CD4-positive, alpha-beta memory T cell (primary cell): ENCODE measurements at regions of chr3 and their contacts with region 1.

Region 1: DNA sequence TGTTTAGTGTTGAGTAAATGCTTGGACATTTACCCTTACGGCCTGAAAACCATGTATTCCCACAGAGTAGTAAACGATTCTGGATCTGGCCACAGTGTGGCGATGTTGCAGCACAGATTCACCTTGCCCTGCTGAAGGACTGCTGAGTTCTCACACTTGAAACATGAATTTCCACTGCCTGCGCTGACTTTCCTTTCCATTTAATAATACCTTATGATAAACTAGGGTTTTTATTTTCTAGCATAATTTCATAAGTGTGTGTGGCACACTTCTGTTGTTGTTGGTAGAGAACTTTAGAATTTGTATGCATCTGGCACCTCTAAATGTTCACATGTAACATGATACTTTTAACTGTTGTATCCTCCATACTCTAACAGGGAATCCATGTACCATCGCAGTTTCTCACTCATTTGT is 53.9 kb downstream of the C3orf38 start:
- DNase-seq: peak in 4 of 5 donors; percentile 17 to 33 (median 20)
- H3K4me3 ChIP-seq: no peak overlapping the region
- H3K4me3 Mint-ChIP-seq: no peak overlapping the region
- H3K27ac ChIP-seq: no peak overlapping the region
- H3K27ac Mint-ChIP-seq: peak overlapping the region in 1 of 7 donors; percentile 14
- H3K4me1 ChIP-seq: no peaks in the 10 kb centered on the region
- H3K4me1 Mint-ChIP-seq: no peaks in the 10 kb centered on the region
- H3K27me3 ChIP-seq: no peaks in the 10 kb centered on the region
- H3K27me3 Mint-ChIP-seq: peaks cover 0 to 4% of the 10 kb centered on the region in 2 donors

Region 2: GRCh38 chr3:88149509-88150362 is 53.9 kb before region 1 on chr3 and contains the start of gene C3orf38:
- CTCF ChIA-PET with region 1: no interaction called
- POLR2A ChIA-PET with region 1: no interaction called
- intact Hi-C with region 1: no loop called
- DNase-seq: peak; percentile 83 to 86 (median 85)
- H3K4me3 ChIP-seq: peak within 1 kb of the TSS; percentile 96 to 99
- H3K4me3 Mint-ChIP-seq: peak within 1 kb of the TSS; percentile 96 to 99 (median 98)
- H3K27ac ChIP-seq: peak within 1 kb of the TSS; percentile 90
- H3K27ac Mint-ChIP-seq: peak within 1 kb of the TSS; percentile 95 to 99 (median 98)
- H3K4me1 ChIP-seq: peaks cover 36% of the 10 kb centered on the region
- H3K4me1 Mint-ChIP-seq: peaks cover 15 to 43% (median 26%) of the 10 kb centered on the region in 4 donors
- H3K27me3 ChIP-seq: no peaks in the 10 kb centered on the region
- H3K27me3 Mint-ChIP-seq: no peaks in the 10 kb centered on the region
- total RNA-seq, gene C3orf38: 36.5 to 38.5 TPM

Region 3: DNA sequence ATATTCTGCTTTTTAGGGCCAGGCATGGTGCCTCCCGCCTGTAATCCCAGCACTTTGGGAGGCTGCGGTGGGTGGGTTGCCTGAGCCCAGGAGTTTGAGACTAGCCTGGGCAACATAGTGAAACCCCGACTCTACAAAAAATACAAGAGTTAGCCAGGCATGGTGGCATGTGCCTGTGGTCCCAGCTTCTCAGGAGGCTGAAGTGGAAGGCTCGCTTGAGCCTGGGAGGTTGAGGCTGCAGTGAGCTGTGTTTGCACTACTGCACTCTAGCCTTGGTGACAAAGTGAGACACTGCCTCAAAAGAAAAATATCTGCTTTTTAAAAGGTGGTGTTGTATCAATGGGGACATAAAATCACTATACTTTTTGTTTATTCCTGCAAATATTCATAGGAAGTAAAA is 58.9 kb after region 1 on chr3:
- CTCF ChIA-PET with region 1: no interaction called
- POLR2A ChIA-PET with region 1: no interaction called
- intact Hi-C with region 1: no loop called
- DNase-seq: no peak
- H3K4me3 ChIP-seq: no peak overlapping the region
- H3K4me3 Mint-ChIP-seq: no peak overlapping the region
- H3K27ac ChIP-seq: no peak overlapping the region
- H3K27ac Mint-ChIP-seq: no peak overlapping the region
- H3K4me1 ChIP-seq: no peaks in the 10 kb centered on the region
- H3K4me1 Mint-ChIP-seq: no peaks in the 10 kb centered on the region
- H3K27me3 ChIP-seq: no peaks in the 10 kb centered on the region
- H3K27me3 Mint-ChIP-seq: peaks cover 0 to 2% of the 10 kb centered on the region in 2 donors

Region 4: DNA sequence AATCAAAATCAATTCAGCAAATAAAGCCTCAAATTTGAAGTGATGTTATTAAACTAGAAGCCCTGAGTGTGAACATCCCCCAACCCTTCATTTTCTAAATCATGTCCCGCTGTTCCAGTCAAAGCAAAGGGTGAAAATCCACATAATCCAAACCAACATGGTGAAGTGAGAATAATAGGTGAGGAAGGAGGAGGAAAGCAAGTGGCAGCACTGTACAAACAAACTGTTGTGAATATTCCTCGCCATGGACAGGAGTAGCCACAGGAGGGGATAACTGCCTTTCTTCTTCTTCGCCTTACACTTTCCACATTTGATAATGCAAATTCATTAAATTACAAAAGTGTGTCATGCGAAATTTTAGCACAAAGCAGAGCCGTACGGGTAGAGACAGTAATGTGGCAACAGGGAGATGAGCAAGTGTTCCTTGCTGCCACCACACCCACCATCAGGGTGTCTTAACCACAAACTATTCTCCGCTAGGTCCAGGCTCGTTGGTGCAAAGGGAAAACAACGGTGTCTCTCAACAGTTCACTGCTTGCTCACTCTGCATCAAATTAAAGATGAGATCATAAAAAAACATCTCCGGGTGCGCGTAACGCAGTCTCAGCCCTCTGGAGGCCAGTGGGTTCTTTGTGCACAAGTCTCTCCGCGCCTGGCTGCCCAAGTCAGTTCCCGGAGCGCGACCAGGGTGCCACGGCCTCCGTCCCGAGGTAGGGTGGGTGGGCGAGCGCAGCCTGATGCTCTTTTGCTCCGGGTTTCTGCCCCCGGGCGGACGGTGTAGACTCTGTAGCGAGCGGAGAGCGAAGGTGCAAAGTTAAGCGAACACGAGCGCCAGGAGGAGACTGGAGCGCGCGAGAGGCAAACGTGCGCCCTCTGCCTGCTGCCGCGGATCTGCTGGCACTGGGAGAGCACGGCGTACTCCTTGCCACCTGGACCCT is 910.5 kb after region 1 on chr3:
- CTCF ChIA-PET with region 1: no interaction called
- POLR2A ChIA-PET with region 1: no interaction called
- intact Hi-C with region 1: loop called (anchors 5 kb)
- DNase-seq: peak; percentile 5 to 25 (median 10)
- H3K4me3 ChIP-seq: no peak overlapping the region
- H3K4me3 Mint-ChIP-seq: peak overlapping the region in 7 of 8 donors; percentile 15 to 66 (median 61)
- H3K27ac ChIP-seq: no peak overlapping the region
- H3K27ac Mint-ChIP-seq: no peak overlapping the region
- H3K4me1 ChIP-seq: no peaks in the 10 kb centered on the region
- H3K4me1 Mint-ChIP-seq: peaks cover 0 to 6% (median 5%) of the 10 kb centered on the region in 4 donors
- H3K27me3 ChIP-seq: no peaks in the 10 kb centered on the region
- H3K27me3 Mint-ChIP-seq: peaks cover 0 to 5% of the 10 kb centered on the region in 2 donors

Region 5: DNA sequence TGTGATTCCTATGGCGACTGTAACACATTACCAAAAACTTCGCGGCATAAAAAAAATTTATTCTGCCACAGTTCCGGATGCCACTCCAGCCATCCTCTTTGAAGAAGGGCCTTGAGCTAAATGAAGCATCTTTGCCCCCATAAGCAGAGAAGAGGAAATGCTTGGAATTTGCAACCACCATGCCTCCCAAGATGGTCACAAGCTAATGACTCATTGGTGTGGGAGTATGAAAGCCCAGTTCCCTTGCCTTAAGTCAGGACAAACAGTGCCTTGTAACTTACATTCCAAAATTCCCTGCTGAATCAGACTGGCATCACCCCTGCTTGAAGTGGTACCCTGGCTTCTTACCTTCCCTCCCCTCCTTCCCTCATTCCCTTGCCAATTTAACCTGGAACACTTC is 1981.2 kb after region 1 on chr3:
- CTCF ChIA-PET with region 1: no interaction called
- POLR2A ChIA-PET with region 1: no interaction called
- intact Hi-C with region 1: loop called (anchors 5 kb)
- DNase-seq: peak in 1 of 5 donors; percentile 17
- H3K4me3 ChIP-seq: no peak overlapping the region
- H3K4me3 Mint-ChIP-seq: no peak overlapping the region
- H3K27ac ChIP-seq: no peak overlapping the region
- H3K27ac Mint-ChIP-seq: no peak overlapping the region
- H3K4me1 ChIP-seq: no peaks in the 10 kb centered on the region
- H3K4me1 Mint-ChIP-seq: no peaks in the 10 kb centered on the region
- H3K27me3 ChIP-seq: no peaks in the 10 kb centered on the region
- H3K27me3 Mint-ChIP-seq: no peaks in the 10 kb centered on the region